Sigmoid colon (tissue), 7 donors: ENCODE measurements at regions of chr10 and their contacts with region 1.

Region 1: DNA sequence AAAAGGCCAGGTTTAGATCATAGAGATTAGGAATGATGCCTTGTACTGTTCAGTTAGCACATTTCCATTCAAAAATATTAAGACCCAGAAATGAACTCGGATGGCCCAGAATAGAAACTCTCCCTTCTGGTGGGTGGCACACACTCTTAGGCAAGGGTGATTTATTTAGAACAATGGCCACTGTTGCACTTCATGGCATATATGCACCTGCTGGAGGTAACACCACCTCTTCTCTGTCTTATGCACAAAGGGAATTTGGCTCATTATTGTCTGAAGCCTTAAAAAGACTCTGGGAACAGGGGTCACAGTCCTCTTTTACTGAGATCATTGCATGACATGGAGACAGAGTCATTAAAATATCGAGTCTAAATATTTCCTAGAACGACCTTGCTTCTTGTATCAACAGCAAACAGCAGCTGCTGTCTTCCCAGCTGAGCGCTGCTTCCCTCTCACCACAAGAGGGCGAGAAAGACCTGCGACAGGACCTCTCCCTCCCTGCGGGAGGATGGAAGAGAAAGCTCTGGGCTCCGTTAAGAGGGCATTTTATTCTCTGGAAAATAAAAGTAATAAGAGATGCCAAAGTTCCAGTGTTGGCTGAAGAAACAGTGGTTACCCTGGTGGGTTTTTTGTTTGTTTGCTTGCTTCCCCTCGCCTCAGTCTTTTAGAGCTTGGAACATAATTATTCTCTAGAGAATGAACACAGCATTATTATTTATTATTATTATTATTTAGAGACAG is 13.6 kb upstream of the BAMBI start:
- DNase-seq: peak; percentile 89
- H3K4me3 ChIP-seq: no peak overlapping the region
- H3K27ac ChIP-seq: no peak overlapping the region
- H3K4me1 ChIP-seq: peaks cover 0 to 5% (median 4%) of the 10 kb centered on the region in 4 donors
- H3K27me3 ChIP-seq: peaks cover 0 to 19% (median 10%) of the 10 kb centered on the region in 3 donors
- CTCF ChIP-seq: peak; percentile 82 to 93 (median 90)
- EP300 ChIP-seq: no peak
- POLR2A ChIP-seq: no peak

Region 2: GRCh38 chr10:29131952-29132820 is 468.4 kb after region 1 on chr10:
- intact Hi-C with region 1: loop called (anchors 5 kb)
- DNase-seq: no peak
- H3K4me3 ChIP-seq: no peak overlapping the region
- H3K27ac ChIP-seq: no peak overlapping the region
- H3K4me1 ChIP-seq: peaks cover 0 to 5% (median 0%) of the 10 kb centered on the region in 4 donors
- H3K27me3 ChIP-seq: no peaks in the 10 kb centered on the region
- CTCF ChIP-seq: no peak
- EP300 ChIP-seq: no peak
- POLR2A ChIP-seq: no peak

Region 3: GRCh38 chr10:29443745-29444523 is 780.2 kb after region 1 on chr10:
- intact Hi-C with region 1: loop called (anchors 10 kb)
- DNase-seq: no peak
- H3K4me3 ChIP-seq: no peak overlapping the region
- H3K27ac ChIP-seq: no peak overlapping the region
- H3K4me1 ChIP-seq: peaks cover 0 to 18% (median 12%) of the 10 kb centered on the region in 4 donors
- H3K27me3 ChIP-seq: no peaks in the 10 kb centered on the region
- CTCF ChIP-seq: no peak
- EP300 ChIP-seq: no peak
- POLR2A ChIP-seq: no peak